ENCODE measurements at regions of chr2 and their contacts with region 1.

Region 1: DNA sequence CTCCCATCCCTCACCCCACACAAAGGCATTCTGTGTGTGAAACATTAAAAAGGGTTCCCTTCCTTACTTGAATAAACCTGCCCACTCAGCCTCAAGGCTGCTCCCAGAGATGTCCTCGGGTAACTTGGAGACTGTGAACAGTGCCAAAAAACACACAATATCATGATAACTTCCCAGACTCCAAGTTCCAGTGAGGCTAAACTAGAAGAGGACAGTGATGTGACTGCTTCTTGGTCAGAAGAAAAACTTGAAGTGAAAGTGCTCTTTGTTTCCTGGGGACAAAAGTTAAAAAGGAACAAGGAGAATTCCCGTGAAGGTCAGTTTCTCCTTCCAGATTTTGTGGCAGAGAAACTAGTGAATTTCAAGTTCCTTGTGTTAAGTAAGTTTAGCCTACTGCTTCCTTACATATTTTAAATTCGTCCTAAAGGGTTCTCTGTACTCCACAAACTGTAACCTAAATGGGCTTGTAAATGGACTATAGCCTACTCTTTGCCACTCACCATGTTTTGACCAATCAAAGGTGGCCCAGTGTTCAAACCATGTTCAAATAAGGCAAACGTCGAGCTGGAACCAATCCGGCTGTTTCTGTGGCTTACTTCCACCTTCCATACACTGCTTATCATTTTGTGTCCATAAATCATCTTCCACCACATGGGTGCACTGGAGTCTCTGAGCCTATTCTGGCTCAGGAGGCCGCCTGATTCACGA is 20.4 kb downstream of the TPRKB start:
- DNase-seq: peak; percentile 7 to 32
- H3K4me3 ChIP-seq: no peak overlapping the region
- H3K27ac ChIP-seq: no peak overlapping the region
- H3K4me1 ChIP-seq: no peaks in the 10 kb centered on the region
- H3K27me3 ChIP-seq: no peaks in the 10 kb centered on the region
- CTCF ChIP-seq: no peak
- POLR2A ChIP-seq: no peak

Region 2: GRCh38 chr2:73700131-73700611 is 16.5 kb before region 1 on chr2:
- intact Hi-C with region 1: no loop called
- DNase-seq: peak in 1 of 2 donors; percentile 7
- H3K4me3 ChIP-seq: no peak overlapping the region
- H3K27ac ChIP-seq: no peak overlapping the region
- H3K4me1 ChIP-seq: peaks cover 9% of the 10 kb centered on the region
- H3K27me3 ChIP-seq: no peaks in the 10 kb centered on the region
- CTCF ChIP-seq: no peak
- POLR2A ChIP-seq: no peak

Region 3: GRCh38 chr2:73759285-73759764 is 42.6 kb after region 1 on chr2:
- intact Hi-C with region 1: loop called (anchors 1 kb)
- DNase-seq: no peak
- H3K4me3 ChIP-seq: no peak overlapping the region
- H3K27ac ChIP-seq: no peak overlapping the region
- H3K4me1 ChIP-seq: peaks cover 16% of the 10 kb centered on the region
- H3K27me3 ChIP-seq: no peaks in the 10 kb centered on the region
- CTCF ChIP-seq: no peak
- POLR2A ChIP-seq: no peak

Measured in vagina (tissue), 2 donors.